BJ (cell line): ENCODE measurements at regions of chr6 and their contacts with region 1.

Region 1: GRCh38 chr6:41367700-41368099 is 32.3 kb downstream of the NCR2 start:
- DNase-seq: no peak
- H3K4me3 ChIP-seq: no peak overlapping the region
- H3K27me3 ChIP-seq: peaks cover 8% of the 10 kb centered on the region
- CTCF ChIP-seq: peak; percentile 82

Region 2: DNA sequence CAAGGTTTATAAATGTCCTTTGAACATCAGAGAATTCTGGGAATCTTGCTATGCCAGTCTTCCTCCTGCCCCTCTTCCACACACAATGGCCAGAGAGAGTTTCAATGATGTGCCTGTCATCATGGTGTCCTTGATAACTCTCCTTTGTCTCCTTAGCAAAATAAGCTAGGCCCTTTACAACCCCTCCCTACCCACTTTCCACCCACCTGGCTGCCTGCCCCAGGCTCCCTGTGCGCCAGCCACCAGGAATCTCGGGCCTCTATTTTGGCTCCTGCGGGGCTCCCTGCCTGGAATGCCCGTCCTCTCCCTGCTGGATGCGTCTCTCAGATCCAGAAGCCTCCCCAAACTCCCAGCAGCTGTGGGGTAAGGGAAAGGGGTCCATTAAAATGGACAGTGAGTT is 28.6 kb after region 1 on chr6:
- CTCF ChIA-PET with region 1: interaction called, 10 read pairs
- POLR2A ChIA-PET with region 1: no interaction called
- DNase-seq: no peak
- H3K4me3 ChIP-seq: no peak overlapping the region
- H3K27me3 ChIP-seq: peaks cover 5% of the 10 kb centered on the region
- CTCF ChIP-seq: no peak

Region 3: DNA sequence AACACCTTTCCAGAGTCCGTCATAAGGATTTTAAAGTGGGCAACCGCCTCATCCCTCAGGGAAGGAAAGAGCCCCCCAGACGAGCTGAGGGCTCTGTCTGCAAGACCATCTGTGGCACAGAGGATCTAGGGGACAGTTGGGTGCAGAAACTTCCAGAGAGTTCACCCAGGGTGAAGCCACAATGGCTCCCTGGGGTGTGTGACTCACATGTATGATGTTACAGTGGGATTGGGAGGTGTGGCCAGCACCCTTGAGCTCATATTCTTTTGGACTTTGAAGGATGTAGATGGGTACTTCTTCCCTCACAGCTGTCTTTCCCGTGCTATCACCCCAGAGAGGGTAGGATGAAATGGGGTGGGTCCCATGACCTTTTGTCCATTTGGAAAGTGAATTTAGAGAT is 63.2 kb after region 1 on chr6:
- CTCF ChIA-PET with region 1: interaction called, 10 read pairs
- POLR2A ChIA-PET with region 1: no interaction called
- DNase-seq: no peak
- H3K4me3 ChIP-seq: no peak overlapping the region
- H3K27me3 ChIP-seq: peaks cover 14% of the 10 kb centered on the region
- CTCF ChIP-seq: no peak

Region 4: DNA sequence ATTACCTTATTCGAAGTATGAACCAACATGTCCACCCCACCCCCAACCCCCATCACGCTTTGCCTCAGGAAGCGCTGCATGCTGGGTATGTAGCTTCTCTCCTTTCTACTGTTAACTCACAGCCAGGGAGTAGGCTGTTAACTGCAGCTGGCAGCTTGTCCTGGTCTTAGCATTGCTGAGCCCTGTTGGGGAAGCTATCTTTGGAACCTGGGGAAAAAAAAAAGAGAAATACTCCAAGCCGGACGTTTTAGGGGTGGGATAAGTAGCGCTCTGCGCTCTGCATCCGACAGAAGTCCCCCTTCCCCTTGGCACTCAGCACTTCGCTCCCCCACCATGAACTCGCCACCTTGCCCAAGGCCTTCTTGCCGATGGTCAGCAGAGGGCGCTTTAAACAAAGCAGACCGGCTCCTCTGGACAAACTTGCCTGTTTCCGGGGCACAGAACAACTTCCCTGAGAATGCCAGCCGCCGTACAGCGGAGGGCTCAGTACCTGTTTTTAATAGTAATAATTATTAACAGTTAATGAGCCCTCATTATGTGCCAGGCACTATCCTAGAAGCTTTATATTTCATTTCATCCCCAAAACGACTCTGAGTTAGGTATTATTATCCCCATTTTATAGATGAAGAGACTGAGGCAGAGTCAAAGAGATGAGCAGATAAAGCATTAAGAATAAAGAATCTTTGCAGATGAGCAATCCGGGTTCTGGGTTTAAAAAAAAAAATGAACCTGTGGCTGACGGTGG is 235.3 kb after region 1 on chr6:
- CTCF ChIA-PET with region 1: interaction called, 57 read pairs
- POLR2A ChIA-PET with region 1: no interaction called
- DNase-seq: no peak
- H3K4me3 ChIP-seq: no peak overlapping the region
- H3K27me3 ChIP-seq: no peaks in the 10 kb centered on the region
- CTCF ChIP-seq: peak; percentile 94

Region 5: DNA sequence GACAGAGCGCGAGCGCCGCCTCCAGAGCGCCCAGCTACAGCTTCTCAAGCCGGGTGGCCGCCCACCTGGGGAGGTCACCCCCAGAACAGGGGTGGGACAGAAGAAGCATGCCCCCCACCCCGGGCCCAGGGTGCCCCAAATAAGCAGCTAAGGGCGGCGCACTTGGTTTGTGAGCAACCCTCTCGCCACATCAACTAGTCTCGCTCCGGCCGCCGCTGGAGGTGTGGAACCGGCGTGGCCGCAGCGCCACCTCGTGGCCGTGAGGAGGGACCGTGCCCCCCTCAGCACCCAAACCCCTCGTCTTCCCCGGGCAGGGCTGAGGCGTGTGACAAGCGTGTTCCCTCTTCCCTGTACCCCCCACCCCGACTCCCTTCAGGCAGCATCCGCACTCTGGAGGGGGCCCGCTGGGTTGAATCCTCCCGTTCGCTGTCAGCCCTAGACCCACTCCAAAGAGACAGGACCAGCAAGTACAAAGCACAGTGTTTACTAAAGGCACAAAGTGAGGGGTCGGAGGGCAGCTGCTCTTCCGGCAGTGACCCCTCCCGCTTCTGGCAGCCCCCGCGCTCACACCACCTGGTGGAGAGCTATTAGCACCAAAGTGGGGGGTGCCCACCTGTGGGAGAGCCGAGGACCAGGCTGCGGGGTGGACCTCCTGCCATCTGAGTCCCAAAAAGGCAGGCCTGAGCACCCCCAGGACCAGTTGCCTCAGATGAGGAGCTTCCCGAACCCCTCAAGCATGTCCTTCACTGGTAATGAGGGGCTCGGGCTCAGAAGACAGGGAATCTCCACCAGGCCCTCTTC is 316.0 kb after region 1 on chr6:
- CTCF ChIA-PET with region 1: interaction called, 211 read pairs
- POLR2A ChIA-PET with region 1: no interaction called
- DNase-seq: no peak
- H3K4me3 ChIP-seq: peak overlapping the region; percentile 2; the same call in 1 of the 2 replicates
- H3K27me3 ChIP-seq: no peaks in the 10 kb centered on the region
- CTCF ChIP-seq: peak; percentile 96

Region 6: DNA sequence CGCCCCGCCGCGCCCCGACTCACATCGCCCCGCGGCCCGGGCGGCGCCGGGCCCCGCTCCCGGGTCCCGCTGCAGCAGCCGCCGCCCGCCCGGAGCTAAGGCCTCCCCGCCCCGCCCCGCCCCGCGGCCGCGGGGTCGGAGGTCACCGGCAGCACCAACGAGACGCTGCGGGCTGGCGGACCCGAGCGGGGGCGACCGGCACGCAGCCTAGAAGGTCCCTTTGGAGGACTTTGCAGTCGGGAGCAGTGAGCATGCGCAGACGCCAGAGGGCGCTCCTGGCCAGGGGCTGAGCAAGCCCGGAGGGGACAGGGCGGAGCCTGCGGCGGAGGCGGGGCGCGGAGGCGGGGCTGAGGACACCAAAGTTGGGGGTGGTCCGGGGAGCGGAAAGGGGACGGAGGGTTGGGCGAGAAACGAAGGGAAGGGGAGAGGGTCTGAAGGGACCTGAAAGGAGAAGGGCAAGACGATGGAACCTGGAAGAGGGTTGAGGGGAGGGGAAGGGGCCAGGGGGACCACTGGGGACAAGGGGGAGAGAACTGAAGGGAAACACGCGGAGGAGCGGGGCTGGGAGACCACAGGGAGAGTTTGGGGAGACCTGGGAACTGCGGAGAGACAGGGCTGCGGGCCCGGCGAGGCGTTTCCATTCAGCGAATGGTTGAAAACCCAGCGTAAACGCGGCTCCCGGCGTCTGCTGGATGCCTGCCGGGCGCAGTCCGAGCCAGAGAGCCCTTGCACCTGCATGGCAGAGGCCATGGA is 412.3 kb after region 1 on chr6 and contains the start of gene FRS3:
- CTCF ChIA-PET with region 1: interaction called, 49 read pairs
- POLR2A ChIA-PET with region 1: no interaction called
- DNase-seq: peak; percentile 51
- H3K4me3 ChIP-seq: peak within 1 kb of the TSS; percentile 74
- H3K27me3 ChIP-seq: no peaks in the 10 kb centered on the region
- CTCF ChIP-seq: peak; percentile 96
- polyA plus RNA-seq, gene FRS3: 2.1 and 3.3 TPM in 2 replicates